ENCODE measurements at regions of chr2 and their contacts with region 1.

Region 1: GRCh38 chr2:86079981-86080911 is 25.4 kb downstream of the POLR1A start:
- DNase-seq: peak; percentile 82 to 91
- ATAC-seq: peak; percentile 79 to 92 (median 87)
- H3K4me3 ChIP-seq: no peak overlapping the region
- H3K4me3 Mint-ChIP-seq: peak overlapping the region; percentile 83
- H3K27ac ChIP-seq: peak overlapping the region; percentile 82
- H3K27ac Mint-ChIP-seq: peak overlapping the region; percentile 97
- H3K4me1 ChIP-seq: peaks cover 25% of the 10 kb centered on the region
- H3K4me1 Mint-ChIP-seq: peaks cover 25 to 26% of the 10 kb centered on the region in 2 donors
- H3K27me3 ChIP-seq: no peaks in the 10 kb centered on the region
- H3K27me3 Mint-ChIP-seq: no peaks in the 10 kb centered on the region
- CTCF ChIP-seq: peak; percentile 82

Region 2: GRCh38 chr2:85648619-85649018 is 431.6 kb before region 1 on chr2:
- intact Hi-C with region 1: no loop called
- DNase-seq: peak in 1 of 2 donors; percentile 32
- ATAC-seq: peak; percentile 34 to 68 (median 58)
- H3K4me3 ChIP-seq: no peak overlapping the region
- H3K4me3 Mint-ChIP-seq: no peak overlapping the region
- H3K27ac ChIP-seq: no peak overlapping the region
- H3K27ac Mint-ChIP-seq: no peak overlapping the region
- H3K4me1 ChIP-seq: peaks cover 10% of the 10 kb centered on the region
- H3K4me1 Mint-ChIP-seq: no peaks in the 10 kb centered on the region
- H3K27me3 ChIP-seq: no peaks in the 10 kb centered on the region
- H3K27me3 Mint-ChIP-seq: no peaks in the 10 kb centered on the region
- CTCF ChIP-seq: peak; percentile 36

Region 3: DNA sequence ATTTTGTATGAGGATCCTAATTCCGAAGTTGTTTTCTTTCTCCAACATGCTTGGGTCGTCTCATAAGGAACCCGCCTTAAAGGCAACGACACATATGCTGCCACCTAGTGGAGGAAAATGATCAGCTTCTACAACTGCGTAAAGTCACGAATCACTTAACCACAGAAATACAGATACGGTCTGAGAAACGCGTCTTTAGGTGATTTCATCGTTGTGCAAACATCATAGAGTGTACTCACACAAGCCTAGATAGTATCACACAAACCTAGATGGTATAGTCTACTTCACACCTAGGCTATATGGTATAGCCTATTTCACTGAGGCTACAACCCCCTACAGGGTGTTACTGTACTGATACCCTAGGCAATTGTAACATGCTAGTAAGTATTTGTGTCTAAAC is 372.9 kb before region 1 on chr2:
- intact Hi-C with region 1: loop called (anchors 5 kb)
- DNase-seq: peak in 1 of 2 donors; percentile 89
- ATAC-seq: peak; percentile 58 to 86 (median 66)
- H3K4me3 ChIP-seq: no peak overlapping the region
- H3K4me3 Mint-ChIP-seq: peak overlapping the region; percentile 87
- H3K27ac ChIP-seq: peak overlapping the region; percentile 97
- H3K27ac Mint-ChIP-seq: peak overlapping the region; percentile 93 to 96
- H3K4me1 ChIP-seq: peaks cover 65% of the 10 kb centered on the region
- H3K4me1 Mint-ChIP-seq: peaks cover 51 to 52% of the 10 kb centered on the region in 2 donors
- H3K27me3 ChIP-seq: no peaks in the 10 kb centered on the region
- H3K27me3 Mint-ChIP-seq: no peaks in the 10 kb centered on the region
- CTCF ChIP-seq: peak; percentile 75

Region 4: GRCh38 chr2:85852937-85853498 is 227.2 kb before region 1 on chr2:
- intact Hi-C with region 1: loop called (anchors 1 kb)
- DNase-seq: peak; percentile 71 to 89
- ATAC-seq: peak; percentile 81 to 92 (median 86)
- H3K4me3 ChIP-seq: peak overlapping the region; percentile 12
- H3K4me3 Mint-ChIP-seq: peak overlapping the region; percentile 91
- H3K27ac ChIP-seq: peak overlapping the region; percentile 100
- H3K27ac Mint-ChIP-seq: peak overlapping the region; percentile 94 to 99
- H3K4me1 ChIP-seq: peaks cover 61% of the 10 kb centered on the region
- H3K4me1 Mint-ChIP-seq: peaks cover 66 to 67% of the 10 kb centered on the region in 2 donors
- H3K27me3 ChIP-seq: no peaks in the 10 kb centered on the region
- H3K27me3 Mint-ChIP-seq: no peaks in the 10 kb centered on the region
- CTCF ChIP-seq: no peak

Region 5: GRCh38 chr2:86035883-86036668 is 44.2 kb before region 1 on chr2:
- intact Hi-C with region 1: loop called (anchors 1 kb)
- DNase-seq: peak; percentile 57 to 90
- ATAC-seq: peak; percentile 33 to 55 (median 50)
- H3K4me3 ChIP-seq: peak overlapping the region; percentile 10
- H3K4me3 Mint-ChIP-seq: peak overlapping the region; percentile 92
- H3K27ac ChIP-seq: peak overlapping the region; percentile 98
- H3K27ac Mint-ChIP-seq: peak overlapping the region; percentile 98 to 99
- H3K4me1 ChIP-seq: peaks cover 68% of the 10 kb centered on the region
- H3K4me1 Mint-ChIP-seq: peaks cover 52 to 67% of the 10 kb centered on the region in 2 donors
- H3K27me3 ChIP-seq: no peaks in the 10 kb centered on the region
- H3K27me3 Mint-ChIP-seq: no peaks in the 10 kb centered on the region
- CTCF ChIP-seq: no peak

Region 6: DNA sequence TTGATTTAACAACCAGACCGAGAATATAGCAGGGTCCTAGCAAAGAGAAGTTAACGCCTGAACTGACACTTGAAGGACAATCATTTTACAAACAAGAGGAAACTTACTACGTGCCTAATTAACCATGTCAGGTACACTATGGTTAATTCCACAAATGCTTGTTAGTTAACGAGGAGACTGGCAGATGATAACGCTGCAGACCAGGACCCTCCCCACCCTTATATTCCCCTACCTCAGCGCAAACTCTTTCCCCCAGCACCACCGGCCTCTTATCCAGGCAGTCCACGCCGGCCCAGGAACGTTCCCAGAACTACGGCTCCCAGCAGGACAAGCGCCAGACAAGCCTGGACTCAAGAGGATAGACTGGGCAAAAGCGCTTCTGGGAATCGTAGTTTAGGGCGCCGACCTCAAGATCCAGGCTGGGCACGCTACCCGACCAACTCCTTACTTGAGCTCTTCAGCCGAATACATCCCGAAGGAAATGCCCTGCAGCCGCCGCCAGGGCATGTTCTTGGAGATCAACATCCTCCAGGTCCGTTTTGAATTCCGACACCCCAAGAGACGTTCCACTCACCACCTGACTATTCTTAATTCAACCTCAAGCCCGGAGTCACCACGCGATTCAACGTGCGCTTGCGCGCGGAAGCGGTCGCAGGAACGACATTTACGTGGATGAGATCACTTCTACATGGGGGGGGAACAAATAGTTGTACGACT is 25.2 kb after region 1 on chr2 and contains the start of gene POLR1A:
- intact Hi-C with region 1: loop called (anchors 1 kb)
- DNase-seq: peak; percentile 78 to 93
- ATAC-seq: peak; percentile 76 to 85 (median 78)
- H3K4me3 ChIP-seq: peak within 1 kb of the TSS; percentile 92
- H3K4me3 Mint-ChIP-seq: peak within 1 kb of the TSS; percentile 97
- H3K27ac ChIP-seq: peak within 1 kb of the TSS; percentile 92
- H3K27ac Mint-ChIP-seq: peak within 1 kb of the TSS; percentile 94 to 98
- H3K4me1 ChIP-seq: peaks cover 9% of the 10 kb centered on the region
- H3K4me1 Mint-ChIP-seq: peaks cover 59 to 61% of the 10 kb centered on the region in 2 donors
- H3K27me3 ChIP-seq: no peaks in the 10 kb centered on the region
- H3K27me3 Mint-ChIP-seq: no peaks in the 10 kb centered on the region
- CTCF ChIP-seq: no peak
- total RNA-seq, gene POLR1A: 19.7 to 26.5 (median 22.8) TPM

Measured in natural killer cell (primary cell).